ENCODE measurements at regions of chrX and their contacts with region 1.

Region 1: GRCh38 chrX:109840585-109840984 is 107.5 kb upstream of the ACSL4 start:
- ATAC-seq: peak in 7 of 8 experiments; percentile 46 to 95 (median 63)
- H3K4me3 ChIP-seq: no peak overlapping the region
- H3K27ac ChIP-seq: no peak overlapping the region
- H3K4me1 ChIP-seq: peaks cover 3 to 7% of the 10 kb centered on the region in 2 donors

Region 2: DNA sequence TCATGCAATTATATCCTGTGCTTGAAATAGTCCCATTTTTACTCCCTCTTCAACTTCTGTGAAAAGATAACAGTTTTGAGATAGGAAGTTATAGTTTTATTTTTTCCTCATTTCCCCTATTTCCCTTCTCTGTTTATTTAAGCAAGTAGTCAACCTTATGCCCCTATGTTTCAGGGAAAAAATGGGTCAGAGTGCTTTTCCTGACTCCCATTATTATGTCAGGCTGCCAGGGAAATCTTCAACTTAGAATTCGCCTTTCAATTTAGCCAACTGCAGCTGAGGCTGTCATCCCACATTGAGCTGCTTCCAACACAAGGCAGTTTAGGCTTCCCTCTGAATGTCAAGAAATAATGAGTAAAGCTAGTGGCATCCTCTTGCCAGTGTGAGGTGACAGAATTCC is 261.7 kb before region 1 on chrX:
- in situ Hi-C with region 1: no loop called
- ATAC-seq: no peak
- H3K4me3 ChIP-seq: no peak overlapping the region
- H3K27ac ChIP-seq: no peak overlapping the region
- H3K4me1 ChIP-seq: no peaks in the 10 kb centered on the region

Region 3: DNA sequence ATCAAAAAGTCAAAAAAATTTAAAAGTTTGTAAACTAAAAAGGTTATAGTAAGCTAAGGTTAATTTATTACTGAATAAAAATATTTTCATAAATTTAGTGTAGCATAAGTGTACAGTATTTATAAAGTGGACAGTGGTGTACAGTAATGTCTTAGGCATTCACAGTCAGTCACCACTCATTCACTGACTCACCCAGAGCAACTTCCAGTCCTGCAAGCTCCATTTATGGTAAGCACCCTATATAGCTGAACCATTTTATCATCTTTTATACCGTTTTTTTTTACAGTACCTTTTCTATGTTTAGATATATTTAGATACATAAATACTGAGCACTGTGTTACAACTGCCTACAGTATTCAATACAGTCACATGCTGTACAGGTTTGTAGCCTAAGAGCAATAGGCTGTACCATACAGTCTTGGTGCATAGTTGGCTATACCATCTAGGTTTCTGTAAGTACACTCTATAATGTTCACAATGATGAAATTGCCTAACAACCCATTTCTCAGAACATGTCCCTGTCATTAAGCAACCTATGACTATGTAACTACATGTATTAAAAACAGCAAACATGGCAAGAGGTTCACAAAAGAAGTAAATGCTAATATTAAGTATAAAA is 126.1 kb before region 1 on chrX:
- in situ Hi-C with region 1: no loop called
- ATAC-seq: peak in 3 of 8 experiments; percentile 24 to 82 (median 55)
- H3K4me3 ChIP-seq: no peak overlapping the region
- H3K27ac ChIP-seq: no peak overlapping the region
- H3K4me1 ChIP-seq: no peaks in the 10 kb centered on the region

Region 4: DNA sequence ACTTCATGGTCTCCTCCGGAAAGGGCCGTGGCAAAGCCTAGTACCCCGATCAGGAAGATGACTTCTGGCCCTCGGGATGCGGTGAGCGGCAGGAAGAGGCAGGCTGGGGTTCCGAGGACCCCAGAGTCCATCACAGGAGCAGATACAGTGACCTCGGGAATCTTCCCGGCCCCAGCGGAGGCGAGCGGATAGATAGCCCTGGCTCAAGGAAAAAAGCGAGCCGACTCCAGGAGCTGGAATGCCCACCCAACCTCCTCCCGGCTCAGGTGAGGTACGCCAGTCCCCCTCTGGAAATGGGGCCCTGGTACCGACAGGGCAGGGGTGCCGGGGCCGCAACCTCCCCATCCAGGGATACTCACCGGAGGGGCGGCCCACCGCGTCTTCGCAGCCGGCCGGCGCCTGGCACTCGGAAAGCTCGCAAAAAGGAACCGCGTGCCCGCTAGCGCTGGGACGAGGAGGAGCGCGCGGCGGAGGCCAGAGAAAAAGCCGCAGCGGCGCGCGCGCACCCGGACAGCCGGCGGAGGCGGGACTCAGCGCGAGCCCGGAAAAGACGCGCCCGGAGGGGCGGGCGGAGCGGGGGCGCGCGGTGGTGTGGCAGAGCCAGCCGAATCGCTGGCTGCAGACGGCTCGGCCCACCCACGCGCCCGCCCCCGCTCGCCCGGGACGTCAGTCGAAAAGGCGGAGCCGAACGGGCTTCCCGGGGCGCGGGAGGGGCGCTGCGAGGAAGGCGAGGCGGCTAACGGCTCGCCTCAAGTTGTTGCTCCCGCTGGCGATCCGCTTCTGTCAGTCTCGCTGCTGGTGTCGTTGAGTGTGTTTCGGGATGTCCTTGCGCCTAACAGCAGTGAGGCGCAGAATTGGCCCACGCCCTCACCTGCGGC is 107.6 kb before region 1 on chrX and contains the start of gene ACSL4:
- in situ Hi-C with region 1: loop called in 1 of 9 experiments (anchors 25 kb)
- ATAC-seq: peak; percentile 93 to 97 (median 96)
- H3K4me3 ChIP-seq: peak within 1 kb of the TSS; percentile 57 to 95 (median 70)
- H3K27ac ChIP-seq: peak within 1 kb of the TSS; percentile 69 to 73
- H3K4me1 ChIP-seq: no peaks in the 10 kb centered on the region
- total RNA-seq, gene ACSL4: 27.3 to 71.2 (median 54.0) TPM

Measured in motor neuron (in vitro differentiated cells).